MCF 10A (cell line): ENCODE measurements at regions of chr11 and their contacts with region 1.

Region 1: DNA sequence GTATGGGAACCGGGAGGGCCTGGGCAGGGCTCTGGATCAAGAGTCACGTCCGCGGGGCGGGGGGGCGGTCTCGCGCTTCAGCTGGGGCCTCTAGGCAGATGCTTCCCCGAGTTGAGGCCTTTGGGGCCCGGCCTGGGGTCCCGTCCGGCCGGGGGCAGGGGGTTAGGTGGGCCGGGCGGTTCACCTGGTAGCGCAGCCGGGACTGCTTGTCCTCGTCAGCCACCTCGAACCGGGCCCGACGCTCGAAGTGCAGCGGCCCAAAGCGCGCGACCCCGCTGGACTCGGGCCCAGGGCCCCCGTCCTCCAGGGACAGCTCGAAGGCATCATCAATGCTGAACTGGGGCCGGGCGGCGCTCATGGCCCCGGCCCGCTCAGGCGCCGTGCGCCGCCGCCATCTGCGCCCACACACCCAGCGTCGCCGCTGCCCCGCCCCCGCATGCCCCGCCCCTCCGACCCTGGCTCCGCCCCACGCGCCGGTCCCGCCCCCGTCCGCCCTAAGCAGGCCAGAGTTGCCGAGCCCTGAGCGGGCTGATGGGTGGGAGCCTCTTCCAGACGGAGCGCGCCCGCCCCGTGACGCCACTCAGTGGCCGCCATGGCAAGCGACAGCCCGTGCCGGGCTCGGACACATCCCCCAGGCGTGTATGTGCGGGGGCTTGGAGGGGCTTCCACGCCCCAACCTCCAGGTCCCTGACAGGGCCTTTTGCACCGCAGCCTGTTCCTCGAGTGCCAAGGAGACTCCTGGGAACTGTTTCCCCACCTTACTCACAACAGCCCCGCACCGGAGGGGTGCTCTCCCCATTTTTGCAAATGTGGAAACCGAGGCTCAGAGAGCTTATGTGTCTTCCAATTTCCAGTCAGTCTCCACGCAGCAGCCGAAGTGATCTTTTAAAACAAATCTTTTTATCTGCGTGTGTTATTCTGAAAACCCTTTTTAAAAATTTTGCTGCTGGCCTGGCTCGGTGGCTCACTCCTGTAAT is at the start of gene TMEM134:
- DNase-seq: peak; percentile 88
- H3K4me3 Mint-ChIP-seq: peak within 1 kb of the TSS; percentile 95
- H3K27ac Mint-ChIP-seq: peak within 1 kb of the TSS; percentile 79
- H3K4me1 Mint-ChIP-seq: peaks cover 14% of the 10 kb centered on the region
- H3K27me3 Mint-ChIP-seq: no peaks in the 10 kb centered on the region
- CTCF ChIP-seq: peak; percentile 19
- total RNA-seq, gene TMEM134: 49.7 and 50.1 TPM in 2 replicates

Region 2: DNA sequence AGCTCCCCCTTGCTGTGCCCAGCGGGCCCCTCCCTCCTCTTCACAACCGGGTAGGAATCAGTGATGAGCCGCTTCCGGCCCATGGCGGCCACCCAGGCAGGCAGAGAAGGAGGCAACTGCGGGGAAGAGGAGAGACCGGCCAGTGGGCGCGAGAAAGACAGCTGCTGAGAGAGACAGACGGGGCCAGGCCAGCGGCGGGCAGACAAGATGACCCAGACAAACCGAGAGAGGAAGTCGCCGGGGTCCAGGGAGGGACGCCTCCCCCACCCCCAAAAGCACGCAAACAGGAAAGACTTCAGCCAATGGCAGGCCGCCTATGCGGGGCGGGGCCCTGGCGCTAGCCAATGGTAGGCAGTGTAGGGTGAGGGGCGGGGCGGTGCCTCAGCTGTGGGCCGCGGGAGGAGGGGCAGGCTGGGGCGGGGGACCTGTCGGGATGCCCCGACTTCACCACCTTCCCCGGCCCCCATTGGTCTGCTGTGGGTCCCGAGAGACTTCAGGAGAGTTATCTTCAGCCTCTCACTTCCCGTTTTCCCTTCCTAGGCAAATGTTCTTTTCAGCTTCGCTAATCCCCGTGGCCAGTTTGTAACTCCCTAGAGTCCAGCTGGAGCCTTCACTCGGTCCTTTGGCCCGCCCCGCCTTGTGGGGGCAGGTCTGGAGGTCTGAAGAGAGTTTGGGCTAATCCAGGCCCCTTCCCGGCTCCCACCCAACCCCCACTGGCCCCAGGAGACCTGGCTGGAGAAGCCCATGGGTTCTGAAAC is 115.6 kb before region 1 on chr11 and contains the start of gene POLD4:
- CTCF ChIA-PET with region 1: interaction called, 4 read pairs
- POLR2A ChIA-PET with region 1: interaction called, 12 read pairs
- intact Hi-C with region 1: no loop called
- DNase-seq: peak; percentile 92
- H3K4me3 Mint-ChIP-seq: peak within 1 kb of the TSS; percentile 85
- H3K27ac Mint-ChIP-seq: peak within 1 kb of the TSS; percentile 91
- H3K4me1 Mint-ChIP-seq: peaks cover 58% of the 10 kb centered on the region
- H3K27me3 Mint-ChIP-seq: no peaks in the 10 kb centered on the region
- CTCF ChIP-seq: no peak
- total RNA-seq, gene POLD4: 54.8 and 79.9 TPM in 2 replicates

Region 3: DNA sequence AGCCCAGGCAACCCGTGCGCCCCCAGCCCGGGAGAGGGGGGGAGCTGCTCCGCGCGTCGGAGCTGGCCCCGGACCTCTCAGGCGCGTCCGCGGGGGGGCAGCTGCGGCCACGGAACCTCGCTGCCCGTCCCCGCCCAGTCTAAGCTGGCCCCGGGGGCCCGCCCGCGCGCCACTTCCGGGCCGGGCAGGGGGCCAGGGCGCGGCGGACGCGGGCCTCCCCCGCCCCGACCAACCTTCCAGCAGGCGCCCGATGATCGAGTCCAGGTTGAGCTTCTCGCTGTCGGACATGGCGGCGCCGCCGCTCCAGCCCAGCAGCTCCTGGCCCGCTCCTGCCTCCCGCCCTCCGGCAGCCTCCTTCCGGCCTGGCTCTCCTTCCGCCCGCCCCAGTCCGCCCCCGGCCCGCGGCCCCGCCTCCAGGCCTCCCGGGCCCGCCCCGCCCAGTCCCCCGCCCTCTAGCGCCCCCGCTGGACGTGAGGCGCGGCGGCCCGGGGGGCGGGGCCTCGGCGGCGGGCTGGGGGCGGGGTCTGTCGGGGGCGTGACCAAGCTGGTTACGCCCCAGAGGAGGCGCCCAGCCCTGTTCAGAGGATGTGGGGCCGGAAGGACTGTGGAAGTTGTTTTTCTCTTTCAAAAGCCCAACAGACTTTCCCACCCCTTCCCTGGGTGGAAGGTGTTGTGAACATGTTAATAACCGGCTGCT is 67.5 kb before region 1 on chr11 and contains the start of gene PPP1CA:
- CTCF ChIA-PET with region 1: interaction called, 8 read pairs
- POLR2A ChIA-PET with region 1: interaction called, 48 read pairs
- intact Hi-C with region 1: loop called (anchors 1 kb)
- DNase-seq: peak; percentile 84
- H3K4me3 Mint-ChIP-seq: peak within 1 kb of the TSS; percentile 71
- H3K27ac Mint-ChIP-seq: no peak within 1 kb of the TSS
- H3K4me1 Mint-ChIP-seq: peaks cover 9% of the 10 kb centered on the region
- H3K27me3 Mint-ChIP-seq: no peaks in the 10 kb centered on the region
- CTCF ChIP-seq: peak; percentile 35
- total RNA-seq, gene PPP1CA: 123 and 143 TPM in 2 replicates

Region 4: GRCh38 chr11:67428052-67428914 is 40.8 kb before region 1 on chr11 and contains the start of gene RPS6KB2:
- CTCF ChIA-PET with region 1: interaction called, 8 read pairs
- POLR2A ChIA-PET with region 1: interaction called, 19 read pairs
- intact Hi-C with region 1: no loop called
- DNase-seq: peak; percentile 97
- H3K4me3 Mint-ChIP-seq: peak within 1 kb of the TSS; percentile 96
- H3K27ac Mint-ChIP-seq: peak within 1 kb of the TSS; percentile 92
- H3K4me1 Mint-ChIP-seq: peaks cover under 1% of the 10 kb centered on the region
- H3K27me3 Mint-ChIP-seq: no peaks in the 10 kb centered on the region
- CTCF ChIP-seq: no peak
- total RNA-seq, gene RPS6KB2: 49.8 and 60.1 TPM in 2 replicates

Region 5: GRCh38 chr11:67482825-67483798 is 14.0 kb after region 1 on chr11 and contains the start of gene AIP:
- CTCF ChIA-PET with region 1: interaction called, 3 read pairs
- POLR2A ChIA-PET with region 1: interaction called, 11 read pairs
- intact Hi-C with region 1: no loop called
- DNase-seq: peak; percentile 98
- H3K4me3 Mint-ChIP-seq: peak within 1 kb of the TSS; percentile 90
- H3K27ac Mint-ChIP-seq: peak within 1 kb of the TSS; percentile 99
- H3K4me1 Mint-ChIP-seq: peaks cover 36% of the 10 kb centered on the region
- H3K27me3 Mint-ChIP-seq: no peaks in the 10 kb centered on the region
- CTCF ChIP-seq: peak; percentile 15
- total RNA-seq, gene AIP: 28.7 and 30.5 TPM in 2 replicates

Region 6: GRCh38 chr11:67530282-67530850 is 61.2 kb after region 1 on chr11:
- CTCF ChIA-PET with region 1: no interaction called
- POLR2A ChIA-PET with region 1: no interaction called
- intact Hi-C with region 1: no loop called
- DNase-seq: no peak
- H3K4me3 Mint-ChIP-seq: no peak overlapping the region
- H3K27ac Mint-ChIP-seq: no peak overlapping the region
- H3K4me1 Mint-ChIP-seq: peaks cover 6% of the 10 kb centered on the region
- H3K27me3 Mint-ChIP-seq: no peaks in the 10 kb centered on the region
- CTCF ChIP-seq: no peak

Region 7: DNA sequence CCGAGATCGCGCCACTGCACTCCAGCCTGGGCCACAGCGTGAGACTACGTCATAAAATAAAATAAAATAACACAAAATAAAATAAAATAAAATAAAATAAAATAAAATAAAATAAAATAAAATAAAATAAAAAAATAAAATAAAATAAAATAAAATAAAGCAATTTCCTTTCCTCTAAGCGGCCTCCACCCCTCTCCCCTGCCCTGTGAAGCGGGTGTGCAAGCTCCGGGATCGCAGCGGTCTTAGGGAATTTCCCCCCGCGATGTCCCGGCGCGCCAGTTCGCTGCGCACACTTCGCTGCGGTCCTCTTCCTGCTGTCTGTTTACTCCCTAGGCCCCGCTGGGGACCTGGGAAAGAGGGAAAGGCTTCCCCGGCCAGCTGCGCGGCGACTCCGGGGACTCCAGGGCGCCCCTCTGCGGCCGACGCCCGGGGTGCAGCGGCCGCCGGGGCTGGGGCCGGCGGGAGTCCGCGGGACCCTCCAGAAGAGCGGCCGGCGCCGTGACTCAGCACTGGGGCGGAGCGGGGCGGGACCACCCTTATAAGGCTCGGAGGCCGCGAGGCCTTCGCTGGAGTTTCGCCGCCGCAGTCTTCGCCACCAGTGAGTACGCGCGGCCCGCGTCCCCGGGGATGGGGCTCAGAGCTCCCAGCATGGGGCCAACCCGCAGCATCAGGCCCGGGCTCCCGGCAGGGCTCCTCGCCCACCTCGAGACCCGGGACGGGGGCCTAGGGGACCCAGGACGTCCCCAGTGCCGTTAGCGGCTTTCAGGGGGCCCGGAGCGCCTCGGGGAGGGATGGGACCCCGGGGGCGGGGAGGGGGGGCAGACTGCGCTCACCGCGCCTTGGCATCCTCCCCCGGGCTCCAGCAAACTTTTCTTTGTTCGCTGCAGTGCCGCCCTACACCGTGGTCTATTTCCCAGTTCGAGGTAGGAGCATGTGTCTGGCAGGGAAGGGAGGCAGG is 114.4 kb after region 1 on chr11 and contains the start of gene GSTP1:
- CTCF ChIA-PET with region 1: interaction called, 3 read pairs
- POLR2A ChIA-PET with region 1: interaction called, 15 read pairs
- intact Hi-C with region 1: no loop called
- DNase-seq: peak; percentile 89
- H3K4me3 Mint-ChIP-seq: peak within 1 kb of the TSS; percentile 84
- H3K27ac Mint-ChIP-seq: peak within 1 kb of the TSS; percentile 96
- H3K4me1 Mint-ChIP-seq: peaks cover 49% of the 10 kb centered on the region
- H3K27me3 Mint-ChIP-seq: peaks cover 18% of the 10 kb centered on the region
- CTCF ChIP-seq: peak; percentile 58
- total RNA-seq, gene GSTP1: 1,641 and 1,733 TPM in 2 replicates

Region 8: GRCh38 chr11:67640021-67640757 is 171.1 kb after region 1 on chr11:
- CTCF ChIA-PET with region 1: no interaction called
- POLR2A ChIA-PET with region 1: no interaction called
- intact Hi-C with region 1: no loop called
- DNase-seq: peak; percentile 66
- H3K4me3 Mint-ChIP-seq: no peak overlapping the region
- H3K27ac Mint-ChIP-seq: no peak overlapping the region
- H3K4me1 Mint-ChIP-seq: no peaks in the 10 kb centered on the region
- H3K27me3 Mint-ChIP-seq: no peaks in the 10 kb centered on the region
- CTCF ChIP-seq: peak; percentile 68